Activated CD4-positive, alpha-beta T cell treated with anti-CD3 and anti-CD28 coated beads for 36 hours (primary cell): ENCODE measurements at regions of chr10 and their contacts with region 1.

Region 1: GRCh38 chr10:3935141-3935540 is 150.1 kb upstream of the KLF6 start:
- DNase-seq: peak; percentile 89
- ATAC-seq: peak; percentile 98
- H3K4me3 Mint-ChIP-seq: peak overlapping the region; percentile 37
- H3K27ac Mint-ChIP-seq: peak overlapping the region; percentile 91
- H3K4me1 Mint-ChIP-seq: peaks cover 50% of the 10 kb centered on the region
- H3K27me3 Mint-ChIP-seq: no peaks in the 10 kb centered on the region

Region 2: GRCh38 chr10:3740157-3740871 is 194.8 kb before region 1 on chr10:
- CTCF ChIA-PET with region 1: no interaction called
- POLR2A ChIA-PET with region 1: no interaction called
- intact Hi-C with region 1: loop called in 1 of 2 experiments (anchors 1 kb)
- DNase-seq: peak; percentile 38
- ATAC-seq: peak; percentile 85
- H3K4me3 Mint-ChIP-seq: no peak overlapping the region
- H3K27ac Mint-ChIP-seq: peak overlapping the region; percentile 60
- H3K4me1 Mint-ChIP-seq: peaks cover 33% of the 10 kb centered on the region
- H3K27me3 Mint-ChIP-seq: no peaks in the 10 kb centered on the region

Region 3: DNA sequence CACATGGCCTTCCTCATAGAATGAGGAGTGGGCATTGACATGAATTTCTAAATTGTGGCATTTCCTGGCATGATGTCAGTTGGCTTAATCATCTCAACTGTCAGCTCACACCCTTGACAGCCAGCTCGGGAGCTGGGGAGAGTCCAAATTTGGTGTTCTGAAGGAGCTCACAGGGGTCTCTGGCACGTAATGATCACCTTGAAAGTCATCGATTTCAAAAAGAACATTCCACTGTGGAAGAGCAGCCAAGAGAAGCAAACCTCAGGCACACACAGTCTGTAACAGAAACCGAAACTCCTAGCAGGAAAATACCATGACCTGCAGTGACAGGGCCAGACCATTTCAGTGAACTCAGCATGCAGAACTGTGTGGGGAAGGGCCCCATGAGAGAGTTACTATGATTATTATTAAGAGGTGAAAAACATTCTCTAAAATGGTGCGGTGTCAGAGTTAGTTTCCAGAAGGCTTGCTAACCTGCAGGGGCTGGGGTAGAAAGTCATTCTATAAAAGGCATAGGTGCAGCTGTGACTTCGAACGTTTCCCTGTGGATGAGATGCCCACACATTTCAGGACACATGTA is 123.8 kb before region 1 on chr10:
- CTCF ChIA-PET with region 1: interaction called, 3 read pairs
- POLR2A ChIA-PET with region 1: interaction called, 3 read pairs
- intact Hi-C with region 1: loop called (anchors 1 kb)
- DNase-seq: peak; percentile 78
- ATAC-seq: peak; percentile 62
- H3K4me3 Mint-ChIP-seq: peak overlapping the region; percentile 42
- H3K27ac Mint-ChIP-seq: no peak overlapping the region
- H3K4me1 Mint-ChIP-seq: peaks cover 80% of the 10 kb centered on the region
- H3K27me3 Mint-ChIP-seq: no peaks in the 10 kb centered on the region

Region 4: GRCh38 chr10:3867454-3868270 is 67.5 kb before region 1 on chr10:
- CTCF ChIA-PET with region 1: no interaction called
- POLR2A ChIA-PET with region 1: no interaction called
- intact Hi-C with region 1: loop called (anchors 1 to 2 kb)
- DNase-seq: peak; percentile 60
- ATAC-seq: peak; percentile 76
- H3K4me3 Mint-ChIP-seq: peak overlapping the region; percentile 10
- H3K27ac Mint-ChIP-seq: peak overlapping the region; percentile 81
- H3K4me1 Mint-ChIP-seq: peaks cover 69% of the 10 kb centered on the region
- H3K27me3 Mint-ChIP-seq: no peaks in the 10 kb centered on the region

Region 5: DNA sequence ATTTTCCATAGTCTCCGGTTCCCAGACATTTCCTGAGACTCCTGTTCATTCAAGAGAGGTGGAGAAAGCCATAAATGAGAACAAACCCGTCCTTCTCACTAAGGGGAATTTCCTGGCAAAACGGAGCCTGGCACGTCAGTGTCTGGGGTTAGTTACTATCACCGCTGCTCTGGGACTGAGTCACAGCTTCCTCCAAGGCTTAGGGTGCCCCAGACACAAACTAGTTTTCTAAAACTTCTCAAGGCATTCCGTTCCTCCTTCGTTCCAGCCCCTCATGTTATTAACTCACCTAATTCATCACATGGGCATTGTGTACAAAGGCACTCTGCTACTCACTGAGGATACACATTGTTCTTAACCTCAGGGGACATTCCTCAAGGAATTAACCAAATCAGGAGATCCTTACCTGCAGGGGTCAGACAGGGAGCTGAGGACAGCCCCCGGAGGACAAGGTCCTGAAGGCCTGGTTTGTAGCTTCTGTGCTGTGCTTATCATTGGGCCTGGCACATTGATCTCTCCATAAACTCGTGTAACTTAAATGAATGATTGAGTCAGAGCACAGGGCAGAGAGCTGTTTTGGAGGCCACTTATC is 47.2 kb before region 1 on chr10:
- CTCF ChIA-PET with region 1: no interaction called
- POLR2A ChIA-PET with region 1: no interaction called
- intact Hi-C with region 1: loop called in 1 of 2 experiments (anchors 5 kb)
- DNase-seq: peak; percentile 72
- ATAC-seq: peak; percentile 83
- H3K4me3 Mint-ChIP-seq: peak overlapping the region; percentile 28
- H3K27ac Mint-ChIP-seq: peak overlapping the region; percentile 93
- H3K4me1 Mint-ChIP-seq: peaks cover 38% of the 10 kb centered on the region
- H3K27me3 Mint-ChIP-seq: peaks cover 3% of the 10 kb centered on the region

Region 6: DNA sequence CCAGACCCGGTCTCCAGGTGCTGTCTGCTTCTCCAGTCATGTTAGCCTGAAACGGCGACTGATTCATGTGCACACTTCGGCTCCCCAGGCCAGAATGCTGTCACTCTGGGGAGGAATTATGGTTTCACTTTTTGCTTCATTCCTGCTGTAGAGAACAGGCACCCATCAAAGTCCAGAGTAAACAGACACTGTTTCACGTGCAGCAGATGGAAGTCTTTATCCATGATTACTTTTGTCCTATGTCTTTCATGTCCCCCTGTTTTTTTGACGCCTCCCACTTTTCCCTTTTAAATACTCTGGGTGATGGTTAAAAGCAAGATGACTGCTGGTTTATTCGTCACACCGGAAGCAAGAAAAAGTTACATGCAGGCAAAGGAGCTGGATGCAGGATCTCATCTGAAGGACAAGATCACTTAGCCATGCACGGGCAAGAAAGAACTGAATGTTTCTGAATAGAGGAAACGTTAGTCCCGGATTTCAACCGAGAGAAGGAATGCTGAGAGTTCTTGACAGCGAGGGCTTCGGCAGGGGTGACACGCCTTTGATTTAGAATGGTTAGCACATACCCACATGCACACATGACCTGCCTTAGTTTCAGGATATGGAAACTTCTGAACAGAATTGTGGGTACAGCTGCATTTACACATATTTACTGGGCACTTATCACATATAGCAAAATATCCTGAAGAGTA is 99.9 kb after region 1 on chr10:
- CTCF ChIA-PET with region 1: no interaction called
- POLR2A ChIA-PET with region 1: no interaction called
- intact Hi-C with region 1: loop called (anchors 1 kb)
- DNase-seq: peak; percentile 64
- ATAC-seq: peak; percentile 63
- H3K4me3 Mint-ChIP-seq: peak overlapping the region; percentile 49
- H3K27ac Mint-ChIP-seq: peak overlapping the region; percentile 90
- H3K4me1 Mint-ChIP-seq: peaks cover 30% of the 10 kb centered on the region
- H3K27me3 Mint-ChIP-seq: no peaks in the 10 kb centered on the region